Aorta (tissue), 5 donors: ENCODE measurements at regions of chr4 and their contacts with region 1.

Region 1: GRCh38 chr4:56799824-56800756 is 21.4 kb downstream of the SPINK2 start:
- DNase-seq: peak; percentile 88 to 92
- ATAC-seq: peak; percentile 95
- H3K4me3 ChIP-seq: peak overlapping the region; percentile 73 to 91
- H3K27ac ChIP-seq: peak overlapping the region in 1 of 2 donors; percentile 84
- H3K4me1 ChIP-seq: no peaks in the 10 kb centered on the region
- H3K27me3 ChIP-seq: no peaks in the 10 kb centered on the region

Region 2: GRCh38 chr4:56575820-56576429 is 224.2 kb before region 1 on chr4:
- intact Hi-C with region 1: loop called (anchors 5 to 10 kb)
- DNase-seq: no peak
- ATAC-seq: no peak
- H3K4me3 ChIP-seq: no peak overlapping the region
- H3K27ac ChIP-seq: no peak overlapping the region
- H3K4me1 ChIP-seq: no peaks in the 10 kb centered on the region
- H3K27me3 ChIP-seq: no peaks in the 10 kb centered on the region

Region 3: DNA sequence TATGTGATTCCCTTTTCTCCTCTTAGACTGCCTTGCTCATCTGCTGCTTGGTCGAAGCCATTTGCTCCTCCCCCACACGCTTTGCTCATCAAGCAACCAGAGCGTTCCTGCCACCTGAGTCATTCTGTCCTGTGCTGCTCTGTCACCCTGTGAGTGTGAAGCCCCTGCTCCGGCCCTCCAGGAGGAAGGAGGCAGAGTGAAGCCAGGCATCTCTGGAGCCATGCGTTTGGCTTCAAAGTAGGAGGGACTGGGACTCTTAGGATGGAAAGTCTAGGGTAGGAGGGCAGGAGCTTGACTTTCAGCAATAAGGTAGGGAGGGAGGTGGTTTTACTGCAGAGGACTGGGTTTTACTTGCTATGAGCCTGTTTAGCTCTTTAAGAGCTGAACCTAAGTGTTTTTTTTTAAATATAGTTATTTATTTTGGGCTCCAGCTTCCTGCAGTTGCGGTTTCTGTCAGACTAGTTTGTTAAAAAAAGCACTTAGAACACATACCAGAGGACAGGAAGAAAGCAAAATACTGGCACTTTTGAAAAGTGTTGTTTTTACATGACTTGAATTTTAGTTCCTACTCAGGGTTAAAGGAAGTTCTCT is 42.2 kb before region 1 on chr4:
- intact Hi-C with region 1: loop called in 1 of 2 experiments (anchors 5 kb)
- DNase-seq: peak; percentile 72 to 79
- ATAC-seq: peak; percentile 47
- H3K4me3 ChIP-seq: no peak overlapping the region
- H3K27ac ChIP-seq: peak overlapping the region in 1 of 2 donors; percentile 14
- H3K4me1 ChIP-seq: no peaks in the 10 kb centered on the region
- H3K27me3 ChIP-seq: no peaks in the 10 kb centered on the region